Head of caudate nucleus (tissue), 42 donors: ENCODE measurements at regions of chr5 and their contacts with region 1.

Region 1: GRCh38 chr5:74648835-74649293 is 8.3 kb upstream of the ENC1 start:
- DNase-seq: peak in 17 of 42 donors; percentile 16 to 77 (median 53)

Region 2: DNA sequence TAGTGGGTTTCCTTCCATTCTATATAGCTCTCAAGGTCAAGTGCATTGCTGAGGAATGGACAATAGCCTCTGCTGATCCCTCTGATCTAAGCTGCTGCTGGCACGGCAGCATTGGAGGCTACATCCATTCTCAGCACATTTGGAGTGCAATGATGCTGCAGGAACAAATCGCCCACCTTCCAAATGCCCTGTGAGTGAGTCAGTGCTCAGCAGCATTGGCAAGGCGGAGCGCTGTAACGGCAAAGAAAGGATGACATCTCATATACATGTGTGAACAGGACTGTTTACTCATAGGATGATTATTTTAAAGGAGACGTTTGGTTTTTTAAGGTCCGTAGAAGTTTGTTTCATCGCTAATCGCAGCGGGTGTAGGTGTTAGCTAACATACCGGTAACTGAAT is 614.1 kb before region 1 on chr5:
- intact Hi-C with region 1: loop called (anchors 5 kb)
- DNase-seq: peak in 38 of 42 donors; percentile 11 to 81 (median 48)